Panc1 (cell line): ENCODE measurements at regions of chr15 and their contacts with region 1.

Region 1: DNA sequence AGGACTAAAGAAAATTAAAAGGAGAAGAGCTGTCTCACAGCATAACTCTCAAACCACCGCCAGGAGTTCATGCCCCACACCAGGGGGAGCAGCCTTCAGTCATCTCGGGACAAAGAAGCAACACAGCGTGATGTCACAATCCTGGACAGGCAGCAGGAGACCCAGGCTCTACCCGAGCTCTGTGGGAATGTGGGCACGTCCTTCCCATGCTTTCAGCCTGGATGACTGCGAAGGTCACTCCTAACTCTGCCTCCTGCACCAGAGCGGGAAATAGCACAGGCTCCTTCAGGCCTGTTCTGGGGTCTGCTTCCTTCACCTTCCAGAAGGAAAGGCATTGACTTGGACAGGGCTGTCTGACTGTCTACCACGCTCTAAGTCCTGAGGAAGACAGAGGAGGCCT is 31.3 kb downstream of the NOX5 start:
- DNase-seq: no peak
- ATAC-seq: 0 out of 2 replicates have a peak, but pooled peaks have one; percentile 45
- H3K4me3 ChIP-seq: no peak overlapping the region
- H3K27ac ChIP-seq: no peak overlapping the region
- H3K4me1 ChIP-seq: no peaks in the 10 kb centered on the region
- H3K27me3 ChIP-seq: no peaks in the 10 kb centered on the region
- CTCF ChIP-seq: no peak

Region 2: DNA sequence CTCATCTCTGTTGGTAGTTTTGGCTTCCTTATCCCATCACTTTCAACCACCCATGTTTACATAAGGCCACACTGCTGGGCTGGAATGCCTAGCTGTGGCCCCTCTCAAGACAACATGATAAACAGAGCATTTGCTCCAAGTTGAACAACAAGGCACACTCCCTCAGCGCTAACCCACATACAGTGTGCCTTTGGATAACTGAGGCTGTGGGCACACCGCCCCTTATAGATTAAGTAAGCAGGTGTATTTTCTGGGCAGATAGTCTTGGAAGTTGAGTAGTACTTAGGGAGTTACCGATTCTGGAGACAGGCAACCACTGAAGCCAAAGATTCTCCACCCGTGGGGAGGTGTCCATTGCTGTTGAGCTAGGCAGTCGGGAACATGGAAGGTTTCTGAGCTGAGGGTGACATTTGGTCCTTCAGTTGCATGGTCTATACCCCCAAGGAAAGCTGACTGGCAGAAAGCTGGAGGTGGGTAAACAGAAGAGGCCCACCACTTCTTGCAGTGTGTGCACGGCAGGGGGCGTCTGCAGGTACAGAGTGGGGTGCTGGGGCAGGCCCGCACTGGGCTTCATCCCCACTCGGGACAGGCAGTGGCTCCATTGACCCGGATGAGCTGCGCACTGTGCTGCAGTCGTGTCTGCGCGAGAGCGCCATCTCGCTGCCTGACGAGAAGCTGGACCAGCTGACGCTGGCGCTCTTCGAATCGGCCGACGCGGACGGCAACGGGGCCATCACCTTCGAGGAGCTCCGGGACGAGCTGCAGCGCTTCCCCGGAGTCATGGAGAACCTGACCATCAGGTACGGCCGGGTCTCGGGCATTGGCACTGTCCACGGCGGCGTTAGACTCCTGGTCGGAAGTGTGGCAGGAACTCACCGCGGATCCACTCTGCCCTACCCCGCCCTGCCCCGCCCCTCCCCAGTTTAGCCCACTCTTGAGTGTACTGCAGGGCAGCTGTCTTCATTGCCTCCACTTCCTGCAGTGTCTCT is 14.5 kb before region 1 on chr15:
- CTCF ChIA-PET with region 1: interaction called, 10 read pairs
- POLR2A ChIA-PET with region 1: no interaction called
- in situ Hi-C with region 1: no loop called
- intact Hi-C with region 1: no loop called
- DNase-seq: no peak
- ATAC-seq: peak; percentile 93
- H3K4me3 ChIP-seq: peak overlapping the region; percentile 32 to 48
- H3K27ac ChIP-seq: no peak overlapping the region
- H3K4me1 ChIP-seq: no peaks in the 10 kb centered on the region; the same call in 1 of the 2 replicates
- H3K27me3 ChIP-seq: no peaks in the 10 kb centered on the region
- CTCF ChIP-seq: peak; percentile 92